ENCODE measurements at regions of chr5 and their contacts with region 1.

Region 1: GRCh38 chr5:81851481-81852178 is 100.7 kb upstream of the SSBP2 start:
- DNase-seq: peak; percentile 93
- ATAC-seq: peak; percentile 89
- H3K4me3 Mint-ChIP-seq: peak overlapping the region; percentile 83
- H3K27ac Mint-ChIP-seq: peak overlapping the region; percentile 93
- H3K4me1 Mint-ChIP-seq: peaks cover 43% of the 10 kb centered on the region
- H3K27me3 Mint-ChIP-seq: no peaks in the 10 kb centered on the region

Region 2: DNA sequence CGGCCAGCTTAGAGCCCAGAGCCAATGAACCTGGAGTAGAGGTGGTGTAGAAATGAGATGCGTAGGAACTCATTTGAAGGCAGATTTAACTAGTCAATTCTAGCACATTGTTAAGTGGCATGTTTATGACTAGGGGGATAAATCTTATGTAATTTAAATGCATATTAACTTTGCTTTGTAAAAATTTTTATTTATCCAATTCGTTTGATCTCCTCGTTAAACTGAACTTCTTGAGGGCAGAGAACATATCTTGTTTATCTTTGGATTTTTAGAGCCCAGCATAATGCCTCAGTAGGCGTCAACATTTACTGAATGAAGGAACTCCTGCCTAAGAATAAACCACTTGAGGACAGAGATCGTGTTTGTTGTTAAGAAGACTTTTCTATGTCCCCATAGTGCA is 416.6 kb before region 1 on chr5:
- CTCF ChIA-PET with region 1: no interaction called
- POLR2A ChIA-PET with region 1: no interaction called
- DNase-seq: no peak
- ATAC-seq: no peak
- H3K4me3 Mint-ChIP-seq: no peak overlapping the region
- H3K27ac Mint-ChIP-seq: no peak overlapping the region
- H3K4me1 Mint-ChIP-seq: no peaks in the 10 kb centered on the region
- H3K27me3 Mint-ChIP-seq: no peaks in the 10 kb centered on the region

Region 3: GRCh38 chr5:81751009-81751835 is 100.4 kb before region 1 on chr5 and contains the start of gene SSBP2:
- CTCF ChIA-PET with region 1: interaction called, 35 read pairs
- POLR2A ChIA-PET with region 1: interaction called, 139 read pairs
- DNase-seq: peak; percentile 99
- ATAC-seq: peak; percentile 91
- H3K4me3 Mint-ChIP-seq: peak within 1 kb of the TSS; percentile 87
- H3K27ac Mint-ChIP-seq: peak within 1 kb of the TSS; percentile 91
- H3K4me1 Mint-ChIP-seq: peaks cover 22% of the 10 kb centered on the region
- H3K27me3 Mint-ChIP-seq: peaks cover 24% of the 10 kb centered on the region
- total RNA-seq, gene SSBP2: 24.3 to 26.7 TPM

Region 4: GRCh38 chr5:81779125-81779915 is 72.3 kb before region 1 on chr5:
- CTCF ChIA-PET with region 1: interaction called, 10 read pairs
- POLR2A ChIA-PET with region 1: interaction called, 18 read pairs
- DNase-seq: peak; percentile 57
- ATAC-seq: peak; percentile 94
- H3K4me3 Mint-ChIP-seq: peak overlapping the region; percentile 74
- H3K27ac Mint-ChIP-seq: peak overlapping the region; percentile 85
- H3K4me1 Mint-ChIP-seq: peaks cover 25% of the 10 kb centered on the region
- H3K27me3 Mint-ChIP-seq: no peaks in the 10 kb centered on the region

Region 5: DNA sequence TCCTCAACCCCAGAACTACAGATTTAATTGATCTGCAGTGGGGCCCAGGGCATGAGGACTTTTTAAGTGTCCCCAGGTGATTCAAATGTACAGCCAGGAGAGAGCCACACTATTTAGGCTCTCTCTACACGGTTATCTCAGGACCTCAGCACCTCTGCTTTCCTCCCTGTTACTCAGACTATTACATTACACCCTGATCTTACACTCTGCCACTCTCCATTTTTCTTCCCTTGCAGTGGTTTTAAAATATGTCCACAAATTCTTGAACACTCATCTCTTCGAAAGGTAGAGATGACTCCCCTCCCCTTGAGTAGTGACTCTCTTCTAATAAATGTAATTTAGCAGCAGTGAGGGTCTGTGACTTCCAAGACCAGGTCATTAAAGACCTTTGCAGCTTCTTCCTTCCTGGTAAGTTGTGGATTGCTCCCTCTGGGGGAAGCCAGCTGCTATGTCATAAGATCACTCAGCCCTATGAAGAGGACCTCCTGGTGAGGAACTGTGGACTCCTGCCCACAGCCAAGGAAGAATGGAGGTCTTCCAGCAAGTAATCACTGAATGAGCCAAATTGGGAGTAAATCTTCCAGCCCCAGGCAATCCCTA is 13.2 kb before region 1 on chr5:
- CTCF ChIA-PET with region 1: interaction called, 40 read pairs
- POLR2A ChIA-PET with region 1: interaction called, 5 read pairs
- DNase-seq: peak; percentile 38
- ATAC-seq: peak; percentile 74
- H3K4me3 Mint-ChIP-seq: no peak overlapping the region
- H3K27ac Mint-ChIP-seq: no peak overlapping the region
- H3K4me1 Mint-ChIP-seq: no peaks in the 10 kb centered on the region
- H3K27me3 Mint-ChIP-seq: peaks cover 3% of the 10 kb centered on the region

Region 6: DNA sequence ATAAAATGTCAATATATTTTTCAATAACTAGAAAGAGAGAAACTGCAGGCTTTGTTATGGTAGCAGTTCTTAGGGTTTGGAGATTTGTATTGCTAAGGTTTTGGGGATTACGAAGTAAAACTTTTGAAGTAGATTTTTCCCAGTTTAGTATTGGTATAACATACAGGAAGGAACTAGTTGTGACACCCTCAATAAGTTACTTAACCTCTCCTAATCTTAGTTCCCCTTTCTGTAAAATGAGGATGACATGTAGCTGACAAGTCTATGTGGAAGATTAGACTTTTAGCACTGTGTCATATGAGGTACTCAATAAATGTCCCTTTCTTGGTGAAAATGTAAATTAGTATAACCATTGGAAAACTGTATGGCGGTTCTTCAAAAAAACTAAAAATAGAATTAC is 46.8 kb after region 1 on chr5:
- CTCF ChIA-PET with region 1: no interaction called
- POLR2A ChIA-PET with region 1: no interaction called
- DNase-seq: no peak
- ATAC-seq: no peak
- H3K4me3 Mint-ChIP-seq: no peak overlapping the region
- H3K27ac Mint-ChIP-seq: no peak overlapping the region
- H3K4me1 Mint-ChIP-seq: no peaks in the 10 kb centered on the region
- H3K27me3 Mint-ChIP-seq: no peaks in the 10 kb centered on the region

Region 7: DNA sequence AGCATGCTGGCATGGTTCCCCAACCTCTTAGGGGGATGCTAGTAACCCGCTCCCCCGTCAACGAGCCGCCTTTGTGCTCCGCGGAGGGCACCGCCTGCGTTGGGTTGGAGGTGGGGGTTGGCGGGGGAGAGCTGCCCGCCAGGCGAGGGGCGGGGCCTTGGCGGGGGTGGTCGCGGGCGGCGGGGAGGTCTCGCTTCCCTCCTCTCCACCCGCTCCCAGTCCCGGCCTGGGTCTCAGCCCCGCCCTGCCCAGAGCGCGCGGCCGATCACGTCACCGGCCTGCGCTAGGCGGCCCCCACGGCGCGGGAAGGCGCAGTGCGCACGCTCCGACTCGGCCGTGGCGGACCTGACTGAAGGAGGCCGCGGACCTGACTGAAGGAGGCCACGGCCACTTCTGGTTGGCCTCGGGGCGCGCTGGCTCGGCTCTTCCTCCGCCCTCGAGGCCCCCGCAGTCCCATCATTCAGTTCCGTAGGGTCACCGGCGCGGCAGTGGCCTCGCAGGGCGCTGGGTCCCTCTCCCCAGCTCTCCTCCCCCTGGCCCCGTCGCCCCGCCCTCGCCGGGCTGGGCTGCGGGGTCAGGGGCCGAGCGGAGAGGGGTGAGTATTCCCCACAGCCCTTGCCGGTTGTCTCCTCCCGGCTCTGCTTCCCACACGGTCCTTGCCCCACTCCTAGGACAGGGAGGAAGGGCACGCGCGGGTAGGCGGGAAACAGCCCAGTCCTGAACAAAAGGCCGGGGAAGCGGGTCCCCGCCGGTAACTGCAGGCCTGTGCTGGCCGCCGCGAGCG is 120.3 kb after region 1 on chr5 and contains the start of gene ATG10:
- CTCF ChIA-PET with region 1: interaction called, 5 read pairs
- POLR2A ChIA-PET with region 1: interaction called, 20 read pairs
- DNase-seq: peak; percentile 91
- ATAC-seq: peak; percentile 96
- H3K4me3 Mint-ChIP-seq: peak within 1 kb of the TSS; percentile 93
- H3K27ac Mint-ChIP-seq: peak within 1 kb of the TSS; percentile 97
- H3K4me1 Mint-ChIP-seq: peaks cover 36% of the 10 kb centered on the region
- H3K27me3 Mint-ChIP-seq: no peaks in the 10 kb centered on the region
- total RNA-seq, gene ATG10: 9.5 to 11.5 TPM

Region 8: DNA sequence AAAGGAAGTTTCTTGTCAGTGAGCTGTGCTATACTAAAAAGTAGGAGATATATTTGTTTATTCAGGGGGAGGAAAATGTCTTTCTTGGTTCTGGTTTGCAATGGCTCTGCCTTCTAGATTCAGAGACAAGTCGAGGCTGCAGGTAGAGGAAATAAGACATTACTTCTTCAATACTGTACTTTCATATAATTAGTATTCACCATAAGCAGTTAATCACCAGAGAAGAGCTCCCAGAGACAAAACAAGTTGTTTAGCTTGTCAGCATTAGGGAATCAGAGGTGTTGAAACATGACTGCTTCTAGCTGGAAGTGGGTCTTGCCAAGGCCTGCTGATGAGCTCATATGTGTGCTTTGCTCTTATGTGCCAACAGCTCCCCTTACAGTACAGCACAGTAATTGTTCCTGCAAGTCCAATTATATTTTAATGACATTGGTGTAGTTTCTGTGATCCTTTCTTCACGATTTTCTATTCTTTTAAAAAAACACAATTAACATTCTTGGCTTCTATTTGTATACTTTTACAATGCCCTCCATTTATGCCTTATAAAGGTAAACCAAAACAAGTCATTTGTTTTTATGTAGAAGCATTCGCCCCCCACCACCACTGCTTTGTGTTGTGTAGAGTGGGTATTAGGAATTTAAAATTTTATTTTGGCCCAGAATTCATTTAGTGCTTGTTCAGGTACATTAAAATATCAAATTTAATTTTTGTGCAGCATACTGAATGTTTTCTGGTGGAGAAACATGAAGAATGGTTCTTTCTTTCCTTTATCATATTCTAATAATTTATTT is 314.3 kb after region 1 on chr5:
- CTCF ChIA-PET with region 1: interaction called, 10 read pairs
- POLR2A ChIA-PET with region 1: no interaction called
- DNase-seq: peak; percentile 55
- ATAC-seq: peak; percentile 80
- H3K4me3 Mint-ChIP-seq: no peak overlapping the region
- H3K27ac Mint-ChIP-seq: no peak overlapping the region
- H3K4me1 Mint-ChIP-seq: no peaks in the 10 kb centered on the region
- H3K27me3 Mint-ChIP-seq: no peaks in the 10 kb centered on the region

Measured in activated CD8-positive, alpha-beta T cell treated with anti-CD3 and anti-CD28 coated beads, Interleukin-2, amount 10 ng/mL, durations not matched to agents 7 days and 5 days (primary cell).